Thyroid gland (tissue), 4 donors: ENCODE measurements at regions of chr2 and their contacts with region 1.

Region 1: DNA sequence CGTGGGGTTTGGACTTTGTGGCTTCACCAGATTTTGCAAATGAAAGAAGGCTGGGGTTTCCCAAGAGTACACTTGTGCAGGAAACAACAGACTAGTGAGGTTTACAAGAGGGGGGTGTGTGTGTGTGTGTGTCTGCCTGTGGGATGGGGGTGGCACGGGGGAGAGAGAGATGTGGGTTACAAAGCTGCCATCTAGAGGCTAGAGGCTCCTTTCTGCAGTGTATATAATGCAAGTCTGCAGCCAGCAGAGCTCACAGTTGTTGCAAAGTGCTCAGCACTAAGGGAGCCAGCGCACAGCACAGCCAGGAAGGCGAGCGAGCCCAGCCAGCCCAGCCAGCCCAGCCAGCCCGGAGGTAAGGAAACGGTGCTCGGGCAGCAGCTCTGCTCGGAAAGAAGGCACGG is at the start of gene ACKR3:
- DNase-seq: peak; percentile 86 to 87
- H3K4me3 ChIP-seq: peak within 1 kb of the TSS in 2 of 3 donors; percentile 29 to 36
- H3K27ac ChIP-seq: peak within 1 kb of the TSS; percentile 91 to 97 (median 96)
- H3K4me1 ChIP-seq: peaks cover 54 to 61% of the 10 kb centered on the region in 2 donors
- H3K27me3 ChIP-seq: no peaks in the 10 kb centered on the region
- CTCF ChIP-seq: peak in 4 of 6 experiments; percentile 43 to 50 (median 45)
- POLR2A ChIP-seq: peak in 1 of 2 donors; percentile 80
- total RNA-seq, gene ACKR3: 32.2 to 68.5 (median 54.8) TPM

Region 2: GRCh38 chr2:236512902-236513435 is 56.6 kb before region 1 on chr2:
- intact Hi-C with region 1: loop called (anchors 10 kb)
- DNase-seq: peak; percentile 61 to 63
- H3K4me3 ChIP-seq: no peak overlapping the region
- H3K27ac ChIP-seq: peak overlapping the region; percentile 48 to 59 (median 55)
- H3K4me1 ChIP-seq: peaks cover 9 to 12% of the 10 kb centered on the region in 2 donors
- H3K27me3 ChIP-seq: no peaks in the 10 kb centered on the region
- CTCF ChIP-seq: peak; percentile 54 to 84 (median 69)
- POLR2A ChIP-seq: no peak

Region 3: GRCh38 chr2:237026981-237027711 is 457.6 kb after region 1 on chr2:
- intact Hi-C with region 1: loop called (anchors 10 kb)
- DNase-seq: peak; percentile 82 to 86
- H3K4me3 ChIP-seq: no peak overlapping the region
- H3K27ac ChIP-seq: no peak overlapping the region
- H3K4me1 ChIP-seq: peaks cover 4 to 5% of the 10 kb centered on the region in 2 donors
- H3K27me3 ChIP-seq: no peaks in the 10 kb centered on the region
- CTCF ChIP-seq: peak; percentile 79 to 98 (median 90)
- POLR2A ChIP-seq: no peak